Posterior vena cava (tissue), 2 donors: ENCODE measurements at regions of chr7 and their contacts with region 1.

Region 1: GRCh38 chr7:31122649-31123058 is 70.5 kb downstream of the ADCYAP1R1 start:
- DNase-seq: no peak

Region 2: DNA sequence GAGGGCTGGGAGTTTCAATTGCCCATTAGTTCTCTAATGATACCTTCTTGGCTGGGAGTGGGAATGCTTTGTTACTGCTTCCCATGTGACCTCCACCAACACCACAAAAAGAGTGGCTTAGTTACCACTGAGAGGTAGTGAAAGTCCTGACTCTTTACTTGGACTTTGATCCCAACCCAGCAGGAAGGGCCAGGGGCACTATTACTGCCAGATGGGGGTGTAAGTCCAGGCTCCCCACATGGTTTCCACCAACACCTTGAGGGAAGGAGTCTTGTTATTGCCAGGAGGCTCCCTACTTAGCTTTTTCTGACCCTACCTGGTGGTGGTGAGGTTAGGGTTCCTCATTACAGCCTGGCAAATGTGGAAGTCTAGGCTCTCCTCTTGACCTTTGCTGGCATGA is 629.4 kb before region 1 on chr7:
- intact Hi-C with region 1: no loop called
- DNase-seq: no peak

Region 3: DNA sequence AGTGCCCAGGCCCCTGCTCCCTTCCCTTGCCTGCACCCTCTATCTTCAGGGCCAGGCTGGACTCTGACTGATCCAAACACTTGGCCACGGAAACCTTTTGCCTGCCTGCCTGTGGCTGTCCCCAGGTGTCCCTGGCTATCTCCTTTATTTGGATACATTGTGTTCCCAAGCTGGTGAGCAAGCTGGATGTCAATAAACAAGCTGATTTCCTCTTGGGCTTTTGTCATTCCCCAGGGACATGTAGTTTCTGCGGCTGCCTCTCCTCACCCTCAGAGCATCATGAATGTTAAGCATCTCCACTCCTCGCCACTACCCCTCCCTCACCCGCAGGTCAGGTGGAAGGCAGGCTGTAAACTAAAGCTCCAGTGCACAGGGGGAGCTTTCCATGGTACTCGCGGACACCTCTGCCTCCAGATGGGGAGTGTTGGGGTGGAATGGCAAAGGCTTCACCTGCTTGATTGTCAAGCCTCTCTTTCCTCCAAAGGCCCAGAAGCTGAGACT is 152.0 kb before region 1 on chr7:
- intact Hi-C with region 1: no loop called
- DNase-seq: peak; percentile 35

Region 4: GRCh38 chr7:30983042-30983913 is 139.4 kb before region 1 on chr7:
- intact Hi-C with region 1: loop called (anchors 5 kb)
- DNase-seq: peak; percentile 95